CD14-positive monocyte (primary cell): ENCODE measurements at regions of chr3 and their contacts with region 1.

Region 1: DNA sequence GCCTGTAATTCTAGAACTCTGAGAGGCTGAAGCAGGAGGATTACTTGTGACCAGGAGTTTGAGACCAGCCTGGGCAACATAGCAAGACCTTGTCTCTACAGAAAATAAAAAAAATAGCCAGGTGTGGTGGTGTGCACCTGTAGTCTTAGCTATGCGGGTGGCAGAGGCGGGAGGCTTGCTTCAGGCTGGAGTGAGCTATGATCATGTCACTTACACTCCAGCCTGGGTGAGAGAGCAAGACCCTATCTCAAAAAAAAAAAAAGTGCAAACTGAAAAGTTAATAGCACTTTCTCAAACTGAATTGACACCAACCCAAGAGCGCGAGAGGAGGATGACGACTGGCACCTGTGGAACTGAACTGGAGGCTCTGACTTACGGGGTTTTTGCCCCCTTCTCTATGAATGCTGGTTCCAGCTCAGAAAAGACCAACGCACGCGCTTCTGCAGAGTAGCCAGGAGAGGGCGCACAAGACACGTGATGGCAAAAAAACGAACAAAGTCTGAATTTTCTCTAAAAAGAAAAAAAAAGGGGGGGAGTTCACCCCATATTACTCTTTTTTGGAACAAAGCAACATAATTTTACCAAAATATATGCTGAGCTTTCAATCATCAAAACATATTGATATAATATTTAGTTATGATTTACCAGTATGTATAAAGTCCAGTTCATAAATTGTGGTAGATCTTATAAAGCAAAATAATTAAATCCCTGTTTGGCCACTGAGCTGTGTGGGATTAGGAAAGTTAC is 23.7 kb downstream of the CFAP92 start:
- DNase-seq: peak; percentile 30 to 53 (median 50)
- H3K4me3 ChIP-seq: no peak overlapping the region
- H3K4me3 Mint-ChIP-seq: no peak overlapping the region
- H3K27ac ChIP-seq: no peak overlapping the region
- H3K27ac Mint-ChIP-seq: peak overlapping the region in 1 of 7 donors; percentile 25
- H3K4me1 ChIP-seq: peaks cover 12 to 22% of the 10 kb centered on the region in 2 donors
- H3K4me1 Mint-ChIP-seq: peaks cover 30% of the 10 kb centered on the region
- H3K27me3 ChIP-seq: no peaks in the 10 kb centered on the region
- H3K27me3 Mint-ChIP-seq: peaks cover 0 to 7% (median 2%) of the 10 kb centered on the region in 3 donors
- CTCF ChIP-seq: peak; percentile 96

Region 2: GRCh38 chr3:128680602-128681368 is 289.4 kb before region 1 on chr3:
- intact Hi-C with region 1: no loop called
- DNase-seq: peak; percentile 98 to 99 (median 99)
- H3K4me3 ChIP-seq: peak overlapping the region; percentile 57 to 91 (median 90)
- H3K4me3 Mint-ChIP-seq: peak overlapping the region; percentile 81 to 93
- H3K27ac ChIP-seq: peak overlapping the region; percentile 92 to 97
- H3K27ac Mint-ChIP-seq: peak overlapping the region; percentile 96 to 98 (median 97)
- H3K4me1 ChIP-seq: peaks cover 46 to 47% of the 10 kb centered on the region in 2 donors
- H3K4me1 Mint-ChIP-seq: peaks cover 39% of the 10 kb centered on the region
- H3K27me3 ChIP-seq: no peaks in the 10 kb centered on the region
- H3K27me3 Mint-ChIP-seq: peaks cover 0 to 2% (median 0%) of the 10 kb centered on the region in 3 donors
- CTCF ChIP-seq: peak; percentile 97

Region 3: DNA sequence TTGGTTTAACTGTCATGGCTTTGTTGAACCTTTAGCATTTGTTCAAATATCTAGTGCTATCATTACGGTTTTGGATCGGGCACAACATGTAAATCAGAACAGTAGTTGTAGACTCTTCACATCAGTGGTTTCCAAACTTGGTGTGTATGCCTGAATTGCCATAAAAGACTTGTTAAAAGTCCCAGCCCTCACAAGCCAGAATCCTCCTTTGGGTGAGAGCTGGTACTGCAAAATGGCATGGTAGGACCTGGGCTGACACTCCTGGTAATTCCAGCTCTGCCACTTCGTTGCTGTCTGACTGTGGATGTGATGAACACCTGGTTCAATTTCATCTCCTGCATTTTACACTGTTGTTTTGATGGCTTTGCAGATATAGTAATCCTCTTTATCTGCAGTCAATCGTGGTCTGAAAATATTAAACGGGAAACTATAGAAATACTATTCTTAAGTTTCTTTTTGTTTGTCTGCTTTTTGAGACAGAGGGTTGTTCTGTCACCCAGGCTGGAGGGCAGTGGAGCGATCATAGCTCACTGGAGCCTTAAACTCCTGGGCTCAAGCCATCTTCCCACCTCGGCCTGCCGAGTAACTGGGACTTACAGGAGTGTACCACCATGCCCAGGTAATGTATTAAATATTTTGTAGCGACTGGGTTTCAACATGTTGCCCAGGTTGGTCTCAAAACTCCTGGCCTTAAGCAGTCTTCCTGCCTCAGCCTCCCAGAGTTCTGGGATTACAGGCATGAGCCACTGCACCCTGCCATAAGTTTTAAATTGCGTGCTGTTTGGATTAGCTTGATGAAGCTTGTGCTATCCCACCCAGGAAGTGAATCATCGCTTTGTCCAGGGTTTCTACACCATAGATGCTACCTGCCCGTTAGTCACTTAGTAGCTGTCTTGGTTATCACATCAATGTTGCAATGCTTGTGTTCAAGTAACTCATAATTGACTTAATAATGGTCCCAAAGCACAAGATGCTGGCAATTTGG is 182.6 kb before region 1 on chr3:
- intact Hi-C with region 1: no loop called
- DNase-seq: peak; percentile 75 to 95 (median 85)
- H3K4me3 ChIP-seq: no peak overlapping the region
- H3K4me3 Mint-ChIP-seq: peak overlapping the region in 1 of 2 donors; percentile 17
- H3K27ac ChIP-seq: peak overlapping the region; percentile 50 to 78
- H3K27ac Mint-ChIP-seq: peak overlapping the region; percentile 64 to 96 (median 82)
- H3K4me1 ChIP-seq: peaks cover 55 to 72% of the 10 kb centered on the region in 2 donors
- H3K4me1 Mint-ChIP-seq: peaks cover 87% of the 10 kb centered on the region
- H3K27me3 ChIP-seq: no peaks in the 10 kb centered on the region
- H3K27me3 Mint-ChIP-seq: peaks cover 0 to 1% (median 0%) of the 10 kb centered on the region in 3 donors
- CTCF ChIP-seq: peak; percentile 71

Region 4: GRCh38 chr3:129316131-129317013 is 346.2 kb after region 1 on chr3:
- intact Hi-C with region 1: loop called (anchors 10 kb)
- DNase-seq: peak; percentile 75 to 78 (median 75)
- H3K4me3 ChIP-seq: peak overlapping the region; percentile 53 to 93 (median 80)
- H3K4me3 Mint-ChIP-seq: peak overlapping the region; percentile 81 to 97
- H3K27ac ChIP-seq: peak overlapping the region in 1 of 2 donors; percentile 77
- H3K27ac Mint-ChIP-seq: peak overlapping the region; percentile 24 to 80 (median 59)
- H3K4me1 ChIP-seq: peaks cover 24 to 30% of the 10 kb centered on the region in 2 donors
- H3K4me1 Mint-ChIP-seq: peaks cover 30% of the 10 kb centered on the region
- H3K27me3 ChIP-seq: no peaks in the 10 kb centered on the region
- H3K27me3 Mint-ChIP-seq: peaks cover 1 to 12% (median 4%) of the 10 kb centered on the region in 3 donors
- CTCF ChIP-seq: peak; percentile 56

Region 5: DNA sequence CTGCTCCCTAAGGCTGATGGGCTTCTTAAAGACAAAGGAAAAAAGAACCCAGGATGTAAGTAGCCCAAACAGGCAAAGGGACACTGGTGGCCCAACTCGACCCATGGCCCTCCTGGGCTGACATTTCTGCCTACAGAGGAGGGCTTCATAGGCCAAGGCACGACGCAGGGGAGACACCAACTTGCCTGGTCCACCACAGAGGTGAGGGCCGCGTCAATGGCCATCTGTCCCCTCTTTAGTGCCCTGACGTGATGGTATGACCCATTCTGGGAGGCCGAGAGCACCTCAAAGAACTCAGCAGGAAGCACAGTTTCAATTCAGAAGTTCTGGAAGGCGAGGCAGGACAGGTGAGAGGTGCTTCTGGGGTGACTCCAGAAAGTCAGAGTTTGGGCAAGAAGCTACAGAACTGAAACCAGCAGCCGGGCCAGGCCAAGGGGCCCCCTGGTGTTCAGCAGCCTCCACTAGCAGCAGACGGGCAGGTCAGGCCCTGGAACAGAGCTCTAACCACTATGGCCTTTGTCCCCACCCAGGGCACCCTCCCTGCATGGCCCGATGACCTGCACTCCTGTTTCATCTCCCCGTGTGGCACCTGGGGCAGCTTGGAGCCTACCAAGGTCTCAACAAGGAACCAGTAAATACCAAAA is 353.6 kb after region 1 on chr3:
- intact Hi-C with region 1: loop called (anchors 10 kb)
- DNase-seq: no peak
- H3K4me3 ChIP-seq: no peak overlapping the region
- H3K4me3 Mint-ChIP-seq: no peak overlapping the region
- H3K27ac ChIP-seq: no peak overlapping the region
- H3K27ac Mint-ChIP-seq: no peak overlapping the region
- H3K4me1 ChIP-seq: no peaks in the 10 kb centered on the region
- H3K4me1 Mint-ChIP-seq: peaks cover 3% of the 10 kb centered on the region
- H3K27me3 ChIP-seq: no peaks in the 10 kb centered on the region
- H3K27me3 Mint-ChIP-seq: peaks cover 0 to 4% (median 2%) of the 10 kb centered on the region in 3 donors
- CTCF ChIP-seq: peak; percentile 27